CD8-positive, alpha-beta T cell (primary cell): ENCODE measurements at regions of chr3 and their contacts with region 1.

Region 1: GRCh38 chr3:33113772-33114621 is at the start of gene CRTAP:
- DNase-seq: peak; percentile 70 to 95 (median 87)
- ATAC-seq: peak; percentile 87
- H3K4me3 ChIP-seq: peak within 1 kb of the TSS; percentile 60 to 80
- H3K4me3 Mint-ChIP-seq: peak within 1 kb of the TSS; percentile 91
- H3K27ac ChIP-seq: peak within 1 kb of the TSS; percentile 41 to 80
- H3K27ac Mint-ChIP-seq: peak within 1 kb of the TSS; percentile 89
- H3K4me1 ChIP-seq: peaks cover 7% of the 10 kb centered on the region
- H3K4me1 Mint-ChIP-seq: peaks cover 36% of the 10 kb centered on the region
- H3K27me3 ChIP-seq: no peaks in the 10 kb centered on the region
- H3K27me3 Mint-ChIP-seq: no peaks in the 10 kb centered on the region
- CTCF ChIP-seq: no peak
- total RNA-seq, gene CRTAP: 21.7 to 23.5 TPM

Region 2: GRCh38 chr3:33096093-33096868 is 17.7 kb before region 1 on chr3:
- CTCF ChIA-PET with region 1: interaction called, 3 read pairs
- POLR2A ChIA-PET with region 1: no interaction called
- intact Hi-C with region 1: loop called (anchors 1 to 2 kb)
- DNase-seq: peak; percentile 16 to 70 (median 42)
- ATAC-seq: peak; percentile 55
- H3K4me3 ChIP-seq: peak overlapping the region; percentile 73 to 97
- H3K4me3 Mint-ChIP-seq: peak overlapping the region; percentile 95
- H3K27ac ChIP-seq: peak overlapping the region; percentile 76
- H3K27ac Mint-ChIP-seq: peak overlapping the region; percentile 89
- H3K4me1 ChIP-seq: peaks cover 7% of the 10 kb centered on the region
- H3K4me1 Mint-ChIP-seq: peaks cover 40% of the 10 kb centered on the region
- H3K27me3 ChIP-seq: no peaks in the 10 kb centered on the region
- H3K27me3 Mint-ChIP-seq: no peaks in the 10 kb centered on the region
- CTCF ChIP-seq: no peak

Region 3: GRCh38 chr3:33167716-33168336 is 53.8 kb after region 1 on chr3:
- CTCF ChIA-PET with region 1: no interaction called
- POLR2A ChIA-PET with region 1: no interaction called
- intact Hi-C with region 1: no loop called
- DNase-seq: no peak
- ATAC-seq: no peak
- H3K4me3 ChIP-seq: no peak overlapping the region
- H3K4me3 Mint-ChIP-seq: no peak overlapping the region
- H3K27ac ChIP-seq: no peak overlapping the region
- H3K27ac Mint-ChIP-seq: no peak overlapping the region
- H3K4me1 ChIP-seq: no peaks in the 10 kb centered on the region
- H3K4me1 Mint-ChIP-seq: peaks cover 7% of the 10 kb centered on the region
- H3K27me3 ChIP-seq: no peaks in the 10 kb centered on the region
- H3K27me3 Mint-ChIP-seq: peaks cover 3% of the 10 kb centered on the region
- CTCF ChIP-seq: no peak